ENCODE measurements at regions of chr1 and their contacts with region 1.

Region 1: GRCh38 chr1:175742790-175743459 is 470 bp downstream of the TNR start:
- DNase-seq: peak; percentile 43
- H3K4me3 ChIP-seq: peak overlapping the region in 1 of 2 experiments; percentile 43; a peak in 2 of 4 replicates
- H3K27ac ChIP-seq: peak overlapping the region in 1 of 2 experiments; percentile 51; a peak in 1 of 4 replicates
- H3K4me1 ChIP-seq: peaks cover 0 to 5% of the 10 kb centered on the region in 2 experiments; a peak in 1 of 4 replicates
- H3K27me3 ChIP-seq: no peaks in the 10 kb centered on the region
- CTCF ChIP-seq: no peak
- EP300 ChIP-seq: no peak
- RAD21 ChIP-seq: no peak; the same call in 1 of the 2 replicates

Region 2: GRCh38 chr1:175154629-175155472 is 588.1 kb before region 1 on chr1:
- CTCF ChIA-PET with region 1: interaction called, 12 read pairs
- POLR2A ChIA-PET with region 1: no interaction called
- DNase-seq: peak; percentile 62
- H3K4me3 ChIP-seq: no peak overlapping the region; a peak in 1 of 4 replicates
- H3K27ac ChIP-seq: no peak overlapping the region
- H3K4me1 ChIP-seq: no peaks in the 10 kb centered on the region
- H3K27me3 ChIP-seq: 0 out of 2 replicates have a peak, but pooled peaks cover 10% of the 10 kb centered on the region
- CTCF ChIP-seq: peak; percentile 86
- EP300 ChIP-seq: no peak
- RAD21 ChIP-seq: peak; percentile 87

Region 3: GRCh38 chr1:175471039-175471800 is 271.7 kb before region 1 on chr1:
- CTCF ChIA-PET with region 1: interaction called, 20 read pairs
- POLR2A ChIA-PET with region 1: no interaction called
- DNase-seq: no peak
- H3K4me3 ChIP-seq: no peak overlapping the region
- H3K27ac ChIP-seq: no peak overlapping the region
- H3K4me1 ChIP-seq: peaks cover 0 to 23% of the 10 kb centered on the region in 2 experiments; a peak in 2 of 4 replicates
- H3K27me3 ChIP-seq: no peaks in the 10 kb centered on the region
- CTCF ChIP-seq: no peak
- EP300 ChIP-seq: no peak
- RAD21 ChIP-seq: no peak

Region 4: GRCh38 chr1:175514387-175514953 is 228.5 kb before region 1 on chr1:
- CTCF ChIA-PET with region 1: interaction called, 13 read pairs
- POLR2A ChIA-PET with region 1: no interaction called
- DNase-seq: peak; percentile 69
- H3K4me3 ChIP-seq: no peak overlapping the region
- H3K27ac ChIP-seq: peak overlapping the region in 1 of 2 experiments; percentile 99; a peak in 2 of 4 replicates
- H3K4me1 ChIP-seq: peaks cover 0 to 41% of the 10 kb centered on the region in 2 experiments; a peak in 2 of 4 replicates
- H3K27me3 ChIP-seq: no peaks in the 10 kb centered on the region
- CTCF ChIP-seq: no peak
- EP300 ChIP-seq: peak in 1 of 2 experiments; percentile 90; a peak in 1 of 4 replicates
- RAD21 ChIP-seq: peak; percentile 38; the same call in 1 of the 2 replicates

Region 5: GRCh38 chr1:175600721-175601440 is 142.0 kb before region 1 on chr1:
- CTCF ChIA-PET with region 1: no interaction called
- POLR2A ChIA-PET with region 1: no interaction called
- DNase-seq: no peak
- H3K4me3 ChIP-seq: no peak overlapping the region
- H3K27ac ChIP-seq: no peak overlapping the region
- H3K4me1 ChIP-seq: peaks cover 0 to 3% of the 10 kb centered on the region in 2 experiments; a peak in 1 of 4 replicates
- H3K27me3 ChIP-seq: no peaks in the 10 kb centered on the region
- CTCF ChIP-seq: no peak
- EP300 ChIP-seq: no peak
- RAD21 ChIP-seq: no peak

Region 6: DNA sequence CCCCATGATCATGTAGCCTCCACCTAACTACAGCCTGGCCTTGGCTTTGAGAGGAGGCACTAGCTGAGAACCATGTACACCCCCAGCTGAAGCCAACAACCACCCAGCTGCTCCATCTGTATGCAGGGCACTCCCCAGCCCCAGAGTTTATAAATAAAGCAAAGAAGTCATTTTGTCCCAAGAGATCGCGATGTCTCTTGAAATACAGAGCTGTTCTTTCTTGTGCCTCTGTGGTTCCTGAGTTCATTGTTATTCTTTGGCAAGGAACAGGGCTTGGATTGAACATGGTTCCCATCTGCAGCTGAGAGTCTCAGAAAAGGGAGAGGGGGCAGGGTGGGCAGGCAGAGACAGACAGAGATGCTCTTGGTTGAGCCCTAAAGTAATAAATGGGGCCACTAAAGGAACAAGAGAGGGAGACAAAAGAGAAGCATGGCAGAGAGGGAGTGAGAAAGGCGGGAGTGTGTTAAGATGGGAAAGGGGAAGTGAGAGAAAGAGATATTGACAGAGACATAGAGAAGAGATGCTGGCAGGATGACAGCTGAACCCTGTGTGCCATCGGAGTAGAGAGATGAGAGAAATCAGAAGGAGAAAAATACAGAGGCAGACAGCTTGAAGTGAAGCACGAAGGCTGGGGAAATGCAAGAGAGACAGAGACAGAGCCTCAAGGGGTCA is 62.8 kb before region 1 on chr1:
- CTCF ChIA-PET with region 1: interaction called, 14 read pairs
- POLR2A ChIA-PET with region 1: interaction called, 3 read pairs
- DNase-seq: no peak
- H3K4me3 ChIP-seq: no peak overlapping the region
- H3K27ac ChIP-seq: no peak overlapping the region
- H3K4me1 ChIP-seq: peaks cover 0 to 43% of the 10 kb centered on the region in 2 experiments; a peak in 1 of 4 replicates
- H3K27me3 ChIP-seq: no peaks in the 10 kb centered on the region
- CTCF ChIP-seq: no peak
- EP300 ChIP-seq: no peak
- RAD21 ChIP-seq: no peak

Region 7: DNA sequence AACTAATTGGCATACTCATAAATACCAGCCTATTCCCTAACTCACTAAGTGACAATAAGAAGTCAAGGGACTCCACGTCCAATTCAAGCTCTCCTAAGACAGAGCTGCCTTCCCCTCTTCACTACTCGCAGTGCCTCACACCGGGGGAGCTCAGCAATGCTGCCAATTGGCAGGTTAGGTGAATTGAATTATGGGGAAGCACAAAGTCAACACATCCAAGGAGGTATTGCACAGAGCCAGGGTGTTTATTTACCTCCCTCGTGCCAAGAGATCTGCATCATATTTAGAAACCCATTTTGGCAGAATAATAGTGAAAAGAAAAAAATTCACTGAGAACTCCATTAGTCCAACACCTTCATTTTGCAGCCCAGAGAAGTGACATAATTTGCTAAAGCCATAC is 20.9 kb after region 1 on chr1:
- CTCF ChIA-PET with region 1: interaction called, 74 read pairs
- POLR2A ChIA-PET with region 1: no interaction called
- DNase-seq: no peak
- H3K4me3 ChIP-seq: no peak overlapping the region
- H3K27ac ChIP-seq: no peak overlapping the region
- H3K4me1 ChIP-seq: no peaks in the 10 kb centered on the region
- H3K27me3 ChIP-seq: no peaks in the 10 kb centered on the region
- CTCF ChIP-seq: no peak
- EP300 ChIP-seq: no peak
- RAD21 ChIP-seq: no peak

Region 8: DNA sequence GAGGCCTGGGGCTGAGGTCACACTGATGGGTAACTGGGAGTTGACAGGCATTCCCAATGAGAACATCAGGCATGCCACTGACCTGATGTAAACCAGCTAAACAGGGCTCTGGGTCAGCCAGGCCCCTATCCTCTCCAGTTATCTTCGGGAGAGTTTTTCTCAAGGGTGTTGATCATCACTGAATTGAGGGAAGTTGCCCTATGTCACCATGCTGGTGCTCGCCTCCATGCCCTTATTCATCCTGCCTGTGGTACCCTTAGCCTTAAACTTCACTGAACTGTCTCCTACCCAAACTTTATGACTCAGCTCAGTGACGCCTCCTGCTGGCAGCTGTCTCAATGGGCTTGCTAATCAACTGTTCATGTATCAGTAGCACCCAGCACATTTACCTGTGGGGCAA is 81.2 kb after region 1 on chr1:
- CTCF ChIA-PET with region 1: no interaction called
- POLR2A ChIA-PET with region 1: no interaction called
- DNase-seq: no peak
- H3K4me3 ChIP-seq: peak overlapping the region in 1 of 2 experiments; percentile 32; a peak in 1 of 4 replicates
- H3K27ac ChIP-seq: no peak overlapping the region
- H3K4me1 ChIP-seq: no peaks in the 10 kb centered on the region
- H3K27me3 ChIP-seq: no peaks in the 10 kb centered on the region
- CTCF ChIP-seq: 0 out of 2 replicates have a peak, but pooled peaks have one; percentile 19
- EP300 ChIP-seq: no peak
- RAD21 ChIP-seq: no peak

Region 9: GRCh38 chr1:176000258-176000657 is 257.3 kb after region 1 on chr1:
- CTCF ChIA-PET with region 1: no interaction called
- POLR2A ChIA-PET with region 1: no interaction called
- DNase-seq: no peak
- H3K4me3 ChIP-seq: no peak overlapping the region
- H3K27ac ChIP-seq: no peak overlapping the region
- H3K4me1 ChIP-seq: no peaks in the 10 kb centered on the region
- H3K27me3 ChIP-seq: no peaks in the 10 kb centered on the region
- CTCF ChIP-seq: no peak
- EP300 ChIP-seq: no peak
- RAD21 ChIP-seq: no peak

Region 10: GRCh38 chr1:176051902-176052518 is 309.1 kb after region 1 on chr1:
- CTCF ChIA-PET with region 1: interaction called, 12 read pairs
- POLR2A ChIA-PET with region 1: no interaction called
- DNase-seq: no peak
- H3K4me3 ChIP-seq: no peak overlapping the region
- H3K27ac ChIP-seq: no peak overlapping the region
- H3K4me1 ChIP-seq: peaks cover 0 to 12% of the 10 kb centered on the region in 2 experiments; a peak in 2 of 4 replicates
- H3K27me3 ChIP-seq: no peaks in the 10 kb centered on the region
- CTCF ChIP-seq: no peak
- EP300 ChIP-seq: no peak
- RAD21 ChIP-seq: no peak

Measured in SK-N-SH (cell line).